ENCODE measurements at regions of chr13 and their contacts with region 1.

Region 1: DNA sequence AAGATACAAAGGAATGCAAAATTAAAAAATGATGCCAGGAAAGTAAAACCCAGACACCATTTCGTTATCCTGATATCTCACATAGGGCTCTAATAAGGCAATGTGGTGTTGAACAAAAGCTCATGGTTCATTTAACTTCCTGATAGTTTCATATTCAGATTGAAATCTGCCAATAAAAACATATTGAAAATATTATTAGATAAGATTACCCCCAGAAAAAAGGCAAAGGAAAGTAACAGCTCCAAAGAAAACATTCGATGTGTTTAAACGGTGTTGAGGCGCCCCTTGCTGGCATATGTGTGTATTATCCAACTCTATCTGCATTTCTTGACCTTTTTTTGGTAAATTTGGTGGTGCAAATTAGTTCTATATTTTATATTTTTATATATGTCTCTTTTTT is 75.9 kb downstream of the ESD start:
- DNase-seq: peak in 2 of 3 donors; percentile 32 to 69
- ATAC-seq: peak; percentile 64 to 67
- H3K4me3 ChIP-seq: no peak overlapping the region
- H3K27ac ChIP-seq: no peak overlapping the region
- H3K4me1 ChIP-seq: no peaks in the 10 kb centered on the region
- H3K27me3 ChIP-seq: no peaks in the 10 kb centered on the region

Region 2: DNA sequence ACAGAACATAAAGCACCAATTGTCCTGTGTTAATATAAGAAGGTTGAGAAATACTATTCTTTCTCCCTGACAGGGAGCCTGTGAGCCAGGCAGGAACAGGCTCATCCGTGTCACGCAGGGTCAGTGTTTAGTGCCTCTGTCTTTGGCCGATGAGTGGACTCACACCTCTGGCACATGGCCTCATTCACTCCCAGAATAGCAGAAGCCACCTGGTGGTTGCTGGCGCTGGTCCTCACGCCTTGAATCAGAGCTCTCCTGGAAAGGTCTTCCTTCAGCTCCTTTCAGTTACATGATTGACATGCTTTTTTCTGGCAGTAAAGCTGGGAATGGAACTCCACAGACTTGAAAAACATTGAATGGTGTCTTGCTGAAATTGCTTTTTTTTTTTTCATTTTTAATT is 841.4 kb before region 1 on chr13:
- intact Hi-C with region 1: no loop called
- DNase-seq: peak; percentile 29 to 64 (median 52)
- ATAC-seq: peak; percentile 70 to 83
- H3K4me3 ChIP-seq: no peak overlapping the region
- H3K27ac ChIP-seq: no peak overlapping the region
- H3K4me1 ChIP-seq: peaks cover 2% of the 10 kb centered on the region
- H3K27me3 ChIP-seq: no peaks in the 10 kb centered on the region

Region 3: GRCh38 chr13:46492946-46493345 is 228.1 kb before region 1 on chr13:
- intact Hi-C with region 1: loop called (anchors 2 to 5 kb)
- DNase-seq: no peak
- ATAC-seq: peak in 1 of 2 donors; percentile 34
- H3K4me3 ChIP-seq: no peak overlapping the region
- H3K27ac ChIP-seq: no peak overlapping the region
- H3K4me1 ChIP-seq: no peaks in the 10 kb centered on the region
- H3K27me3 ChIP-seq: no peaks in the 10 kb centered on the region

Region 4: DNA sequence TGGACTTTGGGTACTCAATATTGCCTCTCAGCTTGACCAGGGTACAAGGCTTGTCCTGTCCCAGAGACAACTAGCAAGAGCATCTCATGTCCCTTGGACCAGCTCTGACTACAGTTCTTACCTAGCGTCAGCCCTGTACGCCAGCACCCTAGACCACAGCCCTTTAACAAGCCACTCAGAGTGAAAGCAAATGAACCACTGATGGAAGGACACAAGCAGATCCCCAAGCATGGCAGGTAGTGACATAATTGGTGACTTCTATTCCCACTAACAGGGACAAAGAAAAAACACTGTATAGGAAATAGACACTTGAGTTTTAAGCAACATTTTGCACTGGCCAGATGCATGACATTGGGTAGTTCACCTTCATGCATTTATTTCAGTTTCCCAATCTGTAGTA is 176.8 kb before region 1 on chr13:
- intact Hi-C with region 1: loop called in 1 of 4 experiments (anchors 10 kb)
- DNase-seq: no peak
- ATAC-seq: no peak
- H3K4me3 ChIP-seq: no peak overlapping the region
- H3K27ac ChIP-seq: no peak overlapping the region
- H3K4me1 ChIP-seq: no peaks in the 10 kb centered on the region
- H3K27me3 ChIP-seq: no peaks in the 10 kb centered on the region

Region 5: DNA sequence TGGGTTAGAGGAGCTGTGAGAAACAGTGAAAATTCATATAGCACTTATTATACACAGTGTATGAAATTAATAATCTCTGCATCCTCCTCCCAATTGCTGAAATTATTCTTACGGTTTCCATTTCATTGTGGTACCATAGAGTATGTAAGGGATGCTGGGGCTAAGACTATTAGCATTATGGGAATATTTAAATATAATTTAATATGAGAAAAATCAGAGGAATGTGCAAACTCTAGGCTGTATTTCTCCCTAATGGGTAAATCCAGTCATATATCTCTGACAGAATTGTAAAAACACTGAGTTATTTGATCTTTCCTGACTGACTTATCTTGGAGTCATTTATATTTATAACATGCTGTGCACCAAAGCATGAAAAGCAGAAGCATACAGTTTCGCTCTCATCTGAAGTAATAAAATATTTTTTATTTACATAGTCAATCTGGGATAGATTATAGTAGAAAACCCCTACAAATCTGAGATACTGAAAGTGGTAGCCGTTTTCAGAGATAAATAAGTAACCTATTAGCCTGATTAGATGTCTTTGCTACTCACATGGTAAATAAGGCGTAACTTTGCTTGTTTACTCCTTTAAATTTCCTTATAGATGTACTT is 133.1 kb before region 1 on chr13:
- intact Hi-C with region 1: no loop called
- DNase-seq: no peak
- ATAC-seq: no peak
- H3K4me3 ChIP-seq: no peak overlapping the region
- H3K27ac ChIP-seq: no peak overlapping the region
- H3K4me1 ChIP-seq: peaks cover 13% of the 10 kb centered on the region
- H3K27me3 ChIP-seq: no peaks in the 10 kb centered on the region

Region 6: GRCh38 chr13:46648166-46648635 is 72.9 kb before region 1 on chr13:
- intact Hi-C with region 1: no loop called
- DNase-seq: no peak
- ATAC-seq: peak in 1 of 2 donors; percentile 56
- H3K4me3 ChIP-seq: no peak overlapping the region
- H3K27ac ChIP-seq: no peak overlapping the region
- H3K4me1 ChIP-seq: peaks cover 2% of the 10 kb centered on the region
- H3K27me3 ChIP-seq: no peaks in the 10 kb centered on the region

Measured in right cardiac atrium (tissue), 5 donors.